BJ (cell line): ENCODE measurements at regions of chr9 and their contacts with region 1.

Region 1: GRCh38 chr9:86948074-86948929 is 996 bp upstream of the GAS1 start:
- DNase-seq: no peak
- H3K4me3 ChIP-seq: peak overlapping the region; percentile 46
- H3K27me3 ChIP-seq: no peaks in the 10 kb centered on the region
- CTCF ChIP-seq: peak; percentile 99

Region 2: GRCh38 chr9:86902991-86903733 is 45.1 kb before region 1 on chr9:
- CTCF ChIA-PET with region 1: no interaction called
- POLR2A ChIA-PET with region 1: no interaction called
- DNase-seq: no peak
- H3K4me3 ChIP-seq: no peak overlapping the region
- H3K27me3 ChIP-seq: peaks cover 2% of the 10 kb centered on the region
- CTCF ChIP-seq: no peak

Region 3: DNA sequence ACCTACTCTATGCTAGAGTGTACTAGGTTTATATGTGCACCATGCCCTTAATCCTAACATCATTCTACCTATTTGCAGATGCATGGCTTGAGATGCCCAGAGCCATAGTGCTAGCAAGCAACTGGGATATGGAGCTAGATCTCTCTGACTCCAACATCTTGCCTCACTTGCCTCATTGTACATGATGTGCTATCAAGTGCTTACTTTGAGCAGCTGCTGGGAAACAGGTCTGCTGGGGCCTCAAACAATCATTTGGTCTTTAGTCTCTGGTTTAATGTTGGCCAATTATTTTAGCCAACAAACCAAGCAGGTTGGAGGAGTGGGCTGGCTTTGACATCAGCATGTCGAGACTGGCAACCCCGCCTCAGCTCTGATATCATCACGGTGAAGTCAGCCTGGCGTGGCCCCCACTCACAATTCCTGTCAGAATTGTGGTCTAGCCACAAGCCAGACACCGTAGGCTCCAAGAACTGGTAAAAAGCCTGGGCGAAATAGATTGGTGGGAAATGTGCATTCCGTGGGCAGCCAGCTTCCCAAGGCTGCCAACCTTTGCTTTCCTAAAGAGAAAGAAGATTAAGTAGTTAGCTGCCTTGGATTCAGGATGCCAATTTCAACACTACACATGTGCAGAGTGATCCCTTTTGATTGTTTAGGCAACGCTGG is 20.1 kb after region 1 on chr9:
- CTCF ChIA-PET with region 1: interaction called, 6 read pairs
- POLR2A ChIA-PET with region 1: interaction called, 13 read pairs
- DNase-seq: no peak
- H3K4me3 ChIP-seq: no peak overlapping the region
- H3K27me3 ChIP-seq: no peaks in the 10 kb centered on the region
- CTCF ChIP-seq: no peak